PC-9 (cell line): ENCODE measurements at regions of chr10 and their contacts with region 1.

Region 1: DNA sequence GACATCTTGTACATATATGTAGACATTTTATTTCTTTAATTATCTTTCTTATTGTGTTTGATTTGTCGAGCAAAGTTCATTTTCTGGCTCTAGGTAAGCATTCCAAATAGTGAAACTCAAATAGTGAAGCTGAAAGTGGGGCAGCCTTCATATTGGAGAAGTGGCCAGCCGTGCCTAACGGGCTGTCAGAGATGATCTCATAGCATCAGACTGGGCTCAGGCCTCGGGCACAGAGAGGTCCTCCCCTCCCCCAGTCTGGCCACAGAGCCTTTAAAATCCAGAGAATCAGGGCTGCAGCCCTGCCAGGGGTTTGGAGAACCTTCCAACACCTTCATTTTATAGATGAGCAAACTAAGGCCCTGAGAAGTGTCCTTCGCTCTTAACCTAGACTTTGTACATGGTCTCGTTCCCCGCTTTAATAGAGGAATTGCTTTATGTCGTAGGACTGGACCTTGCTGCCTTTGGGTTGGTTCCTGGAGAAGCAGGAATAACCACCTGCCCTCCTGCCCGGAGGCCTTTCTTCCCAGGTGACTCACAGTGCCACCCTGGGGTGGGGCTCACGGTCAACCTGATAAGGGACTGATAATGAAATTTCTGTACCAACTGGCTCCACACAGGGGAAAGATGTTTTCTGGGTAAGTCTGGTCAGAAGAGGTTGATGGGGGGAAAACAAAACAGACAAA is 7.3 kb downstream of the TSPAN15 start:
- DNase-seq: peak; percentile 97 to 98
- H3K4me3 ChIP-seq: peak overlapping the region; percentile 37
- H3K27ac ChIP-seq: peak overlapping the region; percentile 95
- H3K4me1 ChIP-seq: peaks cover 88% of the 10 kb centered on the region
- H3K27me3 ChIP-seq: no peaks in the 10 kb centered on the region
- CTCF ChIP-seq: no peak

Region 2: DNA sequence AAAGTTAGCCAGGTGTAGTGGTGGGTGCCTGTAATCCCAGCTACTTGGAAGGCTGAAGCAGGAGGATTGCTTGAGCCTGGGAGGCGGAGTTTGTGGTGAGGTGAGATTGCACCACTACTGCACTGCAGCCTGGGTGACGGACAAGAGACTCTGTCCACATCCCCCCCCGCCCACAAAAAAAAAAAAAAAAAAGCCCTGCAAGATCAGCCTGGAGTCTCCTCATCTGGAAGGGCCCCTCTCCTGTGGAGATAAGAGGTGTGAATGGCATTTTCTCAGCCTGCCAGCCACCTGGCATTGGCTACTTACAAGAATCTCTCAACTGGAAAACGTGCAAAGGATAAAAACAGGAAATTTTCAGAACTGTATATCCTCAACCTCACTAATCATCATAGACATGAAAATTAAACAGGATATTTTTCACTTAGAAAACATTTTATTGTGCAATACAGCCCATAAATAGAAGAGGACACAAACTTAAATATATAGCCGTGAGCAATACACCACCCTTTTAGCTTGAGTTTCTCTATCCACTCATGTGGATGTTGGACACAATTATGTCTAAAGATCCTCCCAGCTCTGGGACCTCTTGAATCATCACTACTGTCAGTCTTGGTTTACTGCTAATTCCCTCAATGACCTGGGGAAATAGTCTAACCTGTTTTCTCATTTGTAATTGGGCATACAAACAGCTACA is 18.6 kb before region 1 on chr10:
- CTCF ChIA-PET with region 1: no interaction called
- POLR2A ChIA-PET with region 1: interaction called, 3 read pairs
- intact Hi-C with region 1: loop called (anchors 1 kb)
- DNase-seq: peak; percentile 81 to 96
- H3K4me3 ChIP-seq: peak overlapping the region; percentile 42; the same call in 1 of the 2 replicates
- H3K27ac ChIP-seq: peak overlapping the region; percentile 96
- H3K4me1 ChIP-seq: peaks cover 69% of the 10 kb centered on the region
- H3K27me3 ChIP-seq: no peaks in the 10 kb centered on the region
- CTCF ChIP-seq: 0 out of 2 replicates have a peak, but pooled peaks have one; percentile 4